Naive thymus-derived CD4-positive, alpha-beta T cell (primary cell): ENCODE measurements at regions of chr17 and their contacts with region 1.

Region 1: DNA sequence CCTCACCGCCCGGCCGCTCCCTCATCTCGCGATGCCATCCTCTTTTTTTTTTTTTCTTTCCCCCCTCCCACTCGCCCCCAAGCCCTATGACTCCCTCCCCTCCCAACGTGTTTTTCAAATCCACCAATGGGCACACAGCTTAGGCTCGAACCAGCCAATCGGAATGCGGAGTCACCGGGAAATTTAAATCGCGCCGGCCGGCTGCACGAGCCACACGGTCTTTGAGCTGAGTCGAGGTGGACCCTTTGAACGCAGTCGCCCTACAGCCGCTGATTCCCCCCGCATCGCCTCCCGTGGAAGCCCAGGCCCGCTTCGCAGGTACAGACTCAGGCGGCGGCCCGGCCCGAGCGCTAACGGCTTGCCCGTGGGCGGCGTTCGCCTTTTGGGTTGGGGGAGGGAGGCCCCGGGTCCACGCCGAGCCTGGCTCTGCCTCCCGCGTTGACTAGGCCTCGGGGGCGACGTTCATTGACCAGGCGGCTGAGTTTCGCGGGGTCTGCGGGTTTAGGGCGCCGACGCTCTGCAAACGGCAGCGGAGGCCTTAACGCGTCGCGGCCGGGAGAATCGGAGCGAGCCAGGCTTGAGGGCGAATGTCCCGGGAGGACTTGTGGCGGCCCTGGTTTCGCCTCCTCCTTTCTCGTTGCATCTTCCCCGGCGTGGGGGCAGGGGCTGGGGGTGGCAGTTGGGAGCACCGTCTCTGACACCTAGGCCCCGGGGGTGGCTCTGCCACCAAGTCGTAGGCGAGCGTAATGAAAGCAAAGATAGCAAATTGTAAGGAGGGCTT is at the start of gene KPNA2:
- DNase-seq: peak; percentile 70 to 95 (median 91)
- ATAC-seq: peak; percentile 94
- H3K4me3 ChIP-seq: peak within 1 kb of the TSS; percentile 71
- H3K4me3 Mint-ChIP-seq: peak within 1 kb of the TSS; percentile 83 to 97 (median 91)
- H3K27ac ChIP-seq: peak within 1 kb of the TSS; percentile 91
- H3K27ac Mint-ChIP-seq: peak within 1 kb of the TSS; percentile 83 to 97 (median 92)
- H3K4me1 ChIP-seq: peaks cover 8 to 16% of the 10 kb centered on the region in 2 donors
- H3K4me1 Mint-ChIP-seq: peaks cover 6 to 32% (median 15%) of the 10 kb centered on the region in 7 donors
- H3K27me3 ChIP-seq: no peaks in the 10 kb centered on the region
- H3K27me3 Mint-ChIP-seq: peaks cover 0 to 3% (median 0%) of the 10 kb centered on the region in 5 donors
- total RNA-seq, gene KPNA2: 8.4 to 161 (median 45.9) TPM

Region 2: GRCh38 chr17:67245073-67245755 is 790.5 kb before region 1 on chr17 and contains the start of gene HELZ:
- CTCF ChIA-PET with region 1: no interaction called
- POLR2A ChIA-PET with region 1: no interaction called
- intact Hi-C with region 1: loop called in 1 of 2 experiments (anchors 10 kb)
- DNase-seq: peak; percentile 45 to 81 (median 79)
- ATAC-seq: peak; percentile 89
- H3K4me3 ChIP-seq: peak within 1 kb of the TSS; percentile 83
- H3K4me3 Mint-ChIP-seq: peak within 1 kb of the TSS; percentile 87 to 95 (median 90)
- H3K27ac ChIP-seq: peak within 1 kb of the TSS; percentile 84
- H3K27ac Mint-ChIP-seq: peak within 1 kb of the TSS; percentile 81 to 96 (median 90)
- H3K4me1 ChIP-seq: peaks cover 11 to 49% of the 10 kb centered on the region in 2 donors
- H3K4me1 Mint-ChIP-seq: peaks cover 31 to 52% (median 48%) of the 10 kb centered on the region in 7 donors
- H3K27me3 ChIP-seq: no peaks in the 10 kb centered on the region
- H3K27me3 Mint-ChIP-seq: peaks cover 0 to 5% (median 0%) of the 10 kb centered on the region in 5 donors
- total RNA-seq, gene HELZ: 68.6 to 114 (median 89.3) TPM

Region 3: GRCh38 chr17:67824735-67825626 is 210.7 kb before region 1 on chr17 and contains the start of gene BPTF:
- CTCF ChIA-PET with region 1: no interaction called
- POLR2A ChIA-PET with region 1: no interaction called
- intact Hi-C with region 1: loop called in 1 of 2 experiments (anchors 5 kb)
- DNase-seq: peak; percentile 84 to 95 (median 90)
- ATAC-seq: peak; percentile 93
- H3K4me3 ChIP-seq: peak within 1 kb of the TSS; percentile 77
- H3K4me3 Mint-ChIP-seq: peak within 1 kb of the TSS; percentile 85 to 99 (median 98)
- H3K27ac ChIP-seq: peak within 1 kb of the TSS; percentile 74
- H3K27ac Mint-ChIP-seq: peak within 1 kb of the TSS; percentile 96 to 99 (median 98)
- H3K4me1 ChIP-seq: peaks cover 17 to 28% of the 10 kb centered on the region in 2 donors
- H3K4me1 Mint-ChIP-seq: peaks cover 20 to 39% (median 33%) of the 10 kb centered on the region in 7 donors
- H3K27me3 ChIP-seq: no peaks in the 10 kb centered on the region
- H3K27me3 Mint-ChIP-seq: peaks cover 0 to 23% (median 0%) of the 10 kb centered on the region in 5 donors
- total RNA-seq, gene BPTF: 111 to 219 (median 163) TPM

Region 4: DNA sequence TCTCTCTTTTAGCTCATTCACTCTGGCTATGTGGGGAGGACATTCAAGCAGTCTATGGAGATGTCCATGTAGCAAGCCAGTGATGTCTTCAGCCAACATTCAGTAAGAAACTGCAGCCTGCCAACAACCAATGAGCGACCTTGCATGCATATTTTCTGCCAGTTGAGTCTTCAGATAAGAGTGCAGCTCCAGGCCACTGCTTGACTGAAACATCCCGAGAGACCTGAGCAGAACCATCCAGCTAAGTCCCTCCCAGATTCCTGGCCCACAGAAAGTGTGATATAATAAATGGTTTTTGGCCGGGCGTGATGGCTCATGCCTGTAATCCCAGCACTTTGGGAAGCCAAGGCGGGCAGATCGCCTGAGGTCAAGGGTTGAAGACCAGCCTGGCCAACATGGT is 28.9 kb before region 1 on chr17:
- CTCF ChIA-PET with region 1: no interaction called
- POLR2A ChIA-PET with region 1: no interaction called
- intact Hi-C with region 1: no loop called
- DNase-seq: no peak
- ATAC-seq: no peak
- H3K4me3 ChIP-seq: no peak overlapping the region
- H3K4me3 Mint-ChIP-seq: no peak overlapping the region
- H3K27ac ChIP-seq: no peak overlapping the region
- H3K27ac Mint-ChIP-seq: no peak overlapping the region
- H3K4me1 ChIP-seq: peaks cover 0 to 4% of the 10 kb centered on the region in 2 donors
- H3K4me1 Mint-ChIP-seq: peaks cover 0 to 6% (median 4%) of the 10 kb centered on the region in 7 donors
- H3K27me3 ChIP-seq: no peaks in the 10 kb centered on the region
- H3K27me3 Mint-ChIP-seq: peaks cover 0 to 10% (median 0%) of the 10 kb centered on the region in 5 donors

Region 5: GRCh38 chr17:68019675-68020408 is 15.9 kb before region 1 on chr17:
- CTCF ChIA-PET with region 1: no interaction called
- POLR2A ChIA-PET with region 1: interaction called, 3 read pairs
- intact Hi-C with region 1: loop called (anchors 1 kb)
- DNase-seq: peak; percentile 88 to 100 (median 94)
- ATAC-seq: peak; percentile 96
- H3K4me3 ChIP-seq: peak overlapping the region; percentile 79
- H3K4me3 Mint-ChIP-seq: peak overlapping the region; percentile 85 to 95 (median 89)
- H3K27ac ChIP-seq: peak overlapping the region; percentile 79
- H3K27ac Mint-ChIP-seq: peak overlapping the region; percentile 89 to 100 (median 98)
- H3K4me1 ChIP-seq: peaks cover 6 to 10% of the 10 kb centered on the region in 2 donors
- H3K4me1 Mint-ChIP-seq: peaks cover 10 to 25% (median 17%) of the 10 kb centered on the region in 7 donors
- H3K27me3 ChIP-seq: no peaks in the 10 kb centered on the region
- H3K27me3 Mint-ChIP-seq: peaks cover 0 to 9% (median 0%) of the 10 kb centered on the region in 5 donors

Region 6: GRCh38 chr17:68247445-68248198 is 211.9 kb after region 1 on chr17 and contains the start of gene AMZ2:
- CTCF ChIA-PET with region 1: no interaction called
- POLR2A ChIA-PET with region 1: interaction called, 3 read pairs
- intact Hi-C with region 1: loop called (anchors 1 to 2 kb)
- DNase-seq: peak; percentile 92 to 100 (median 97)
- ATAC-seq: peak; percentile 96
- H3K4me3 ChIP-seq: peak within 1 kb of the TSS; percentile 89
- H3K4me3 Mint-ChIP-seq: peak within 1 kb of the TSS; percentile 80 to 96 (median 92)
- H3K27ac ChIP-seq: peak within 1 kb of the TSS; percentile 99
- H3K27ac Mint-ChIP-seq: peak within 1 kb of the TSS; percentile 78 to 99 (median 97)
- H3K4me1 ChIP-seq: peaks cover 18 to 36% of the 10 kb centered on the region in 2 donors
- H3K4me1 Mint-ChIP-seq: peaks cover 11 to 52% (median 31%) of the 10 kb centered on the region in 7 donors
- H3K27me3 ChIP-seq: no peaks in the 10 kb centered on the region
- H3K27me3 Mint-ChIP-seq: no peaks in the 10 kb centered on the region
- total RNA-seq, gene AMZ2: 47.6 to 85.5 (median 73.8) TPM

Region 7: DNA sequence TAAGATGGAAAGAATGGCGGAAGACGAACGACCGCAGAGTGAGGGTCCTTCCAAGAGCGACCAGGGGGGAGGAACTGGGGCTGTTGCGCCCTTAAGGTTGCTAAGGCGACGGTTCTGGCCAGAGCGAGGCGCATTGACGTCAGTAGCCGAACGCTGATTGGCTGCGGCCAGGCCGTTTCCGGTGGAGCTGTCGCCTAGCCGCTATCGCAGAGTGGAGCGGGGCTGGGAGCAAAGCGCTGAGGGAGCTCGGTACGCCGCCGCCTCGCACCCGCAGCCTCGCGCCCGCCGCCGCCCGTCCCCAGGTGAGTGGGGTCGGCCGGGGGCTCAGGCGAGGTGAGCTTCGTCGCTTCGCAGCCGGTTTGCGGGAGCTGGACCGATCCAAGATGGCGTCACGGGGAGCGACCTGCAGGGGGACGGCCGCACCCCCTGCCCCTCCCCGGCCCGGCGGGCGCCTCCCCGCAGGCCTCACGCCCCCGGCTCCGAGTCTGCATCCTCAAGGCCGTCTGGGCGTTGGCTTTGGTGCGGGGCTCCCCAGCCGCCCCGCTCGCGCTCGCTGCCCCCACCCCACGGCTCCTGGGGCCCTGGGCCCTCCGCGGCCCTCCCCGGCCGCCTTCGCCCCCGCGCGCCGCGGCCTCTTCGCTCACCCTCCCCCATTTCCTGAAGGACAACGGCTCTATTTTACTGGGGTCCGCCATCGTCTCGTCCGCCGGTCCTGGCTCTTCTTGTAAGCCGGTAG is 476.7 kb after region 1 on chr17 and contains the start of gene PRKAR1A:
- CTCF ChIA-PET with region 1: no interaction called
- POLR2A ChIA-PET with region 1: no interaction called
- intact Hi-C with region 1: loop called (anchors 1 kb)
- DNase-seq: peak; percentile 84 to 96 (median 94)
- ATAC-seq: peak; percentile 92
- H3K4me3 ChIP-seq: peak within 1 kb of the TSS; percentile 97
- H3K4me3 Mint-ChIP-seq: peak within 1 kb of the TSS; percentile 89 to 100 (median 100)
- H3K27ac ChIP-seq: peak within 1 kb of the TSS; percentile 98
- H3K27ac Mint-ChIP-seq: peak within 1 kb of the TSS; percentile 91 to 100 (median 100)
- H3K4me1 ChIP-seq: peaks cover 13 to 22% of the 10 kb centered on the region in 2 donors
- H3K4me1 Mint-ChIP-seq: peaks cover 34 to 74% (median 51%) of the 10 kb centered on the region in 7 donors
- H3K27me3 ChIP-seq: no peaks in the 10 kb centered on the region
- H3K27me3 Mint-ChIP-seq: no peaks in the 10 kb centered on the region
- total RNA-seq, gene PRKAR1A: 115 to 224 (median 156) TPM